Motor neuron (in vitro differentiated cells): ENCODE measurements at regions of chr10 and their contacts with region 1.

Region 1: GRCh38 chr10:52308251-52309031 is 5.6 kb upstream of the DKK1 start:
- ATAC-seq: peak; percentile 93 to 97 (median 94)
- H3K4me3 ChIP-seq: peak overlapping the region; percentile 35 to 45 (median 40)
- H3K27ac ChIP-seq: no peak overlapping the region
- H3K4me1 ChIP-seq: no peaks in the 10 kb centered on the region

Region 2: GRCh38 chr10:52198540-52198939 is 109.9 kb before region 1 on chr10:
- in situ Hi-C with region 1: no loop called
- ATAC-seq: no peak
- H3K4me3 ChIP-seq: no peak overlapping the region
- H3K27ac ChIP-seq: no peak overlapping the region
- H3K4me1 ChIP-seq: no peaks in the 10 kb centered on the region

Region 3: DNA sequence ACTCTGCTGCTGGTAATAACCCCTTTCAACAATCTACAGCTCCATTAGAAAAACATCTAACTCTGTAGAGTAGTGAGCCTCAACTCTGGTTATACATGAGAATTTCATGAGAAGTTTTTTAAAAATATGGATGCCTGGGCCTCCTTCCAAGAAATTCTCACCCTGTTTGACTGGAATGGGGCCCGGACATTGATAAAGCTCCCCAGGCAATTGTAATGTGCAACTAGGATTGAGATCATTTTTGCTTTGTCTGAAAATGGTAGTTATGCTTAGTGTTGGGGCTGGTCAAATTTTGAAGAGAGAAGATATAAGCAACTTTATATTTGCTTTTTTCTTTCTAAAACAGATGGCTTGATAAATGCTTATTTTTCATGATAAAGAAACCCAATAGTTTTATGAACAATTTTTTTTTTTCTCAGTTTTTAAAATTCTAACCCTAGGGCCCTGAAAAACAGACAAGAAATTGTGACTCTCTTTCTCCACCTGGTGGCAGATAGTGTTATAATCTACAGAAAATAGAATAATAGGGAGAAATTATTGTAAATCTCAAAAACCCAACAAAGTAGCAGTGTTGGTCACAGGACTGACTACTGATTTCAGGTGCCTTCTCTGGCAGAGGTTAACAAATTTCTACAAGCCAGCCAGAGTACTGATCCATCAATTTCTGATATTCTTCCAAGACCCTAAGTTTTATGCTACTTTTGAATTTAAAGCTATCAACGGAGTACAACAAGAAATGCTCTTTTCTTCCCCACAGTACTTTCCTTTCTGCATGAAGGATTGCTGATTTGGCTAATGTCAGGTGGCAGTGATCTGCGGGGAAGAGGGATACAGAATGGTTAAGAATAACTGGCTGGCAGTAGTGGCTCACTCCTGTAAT is 180.4 kb after region 1 on chr10:
- in situ Hi-C with region 1: loop called in 6 of 9 experiments (anchors 5 to 25 kb)
- ATAC-seq: peak in 3 of 8 experiments; percentile 13 to 44 (median 40)
- H3K4me3 ChIP-seq: no peak overlapping the region
- H3K27ac ChIP-seq: no peak overlapping the region
- H3K4me1 ChIP-seq: peaks cover 0 to 3% of the 10 kb centered on the region in 2 donors

Region 4: GRCh38 chr10:52566471-52567246 is 258.2 kb after region 1 on chr10:
- in situ Hi-C with region 1: loop called in 3 of 9 experiments (anchors 25 kb)
- ATAC-seq: no peak
- H3K4me3 ChIP-seq: no peak overlapping the region
- H3K27ac ChIP-seq: no peak overlapping the region
- H3K4me1 ChIP-seq: no peaks in the 10 kb centered on the region

Region 5: GRCh38 chr10:52740913-52741675 is 432.7 kb after region 1 on chr10:
- in situ Hi-C with region 1: loop called in 2 of 9 experiments (anchors 25 kb)
- ATAC-seq: peak in 3 of 8 experiments; percentile 57 to 85 (median 58)
- H3K4me3 ChIP-seq: no peak overlapping the region
- H3K27ac ChIP-seq: no peak overlapping the region
- H3K4me1 ChIP-seq: no peaks in the 10 kb centered on the region

Region 6: DNA sequence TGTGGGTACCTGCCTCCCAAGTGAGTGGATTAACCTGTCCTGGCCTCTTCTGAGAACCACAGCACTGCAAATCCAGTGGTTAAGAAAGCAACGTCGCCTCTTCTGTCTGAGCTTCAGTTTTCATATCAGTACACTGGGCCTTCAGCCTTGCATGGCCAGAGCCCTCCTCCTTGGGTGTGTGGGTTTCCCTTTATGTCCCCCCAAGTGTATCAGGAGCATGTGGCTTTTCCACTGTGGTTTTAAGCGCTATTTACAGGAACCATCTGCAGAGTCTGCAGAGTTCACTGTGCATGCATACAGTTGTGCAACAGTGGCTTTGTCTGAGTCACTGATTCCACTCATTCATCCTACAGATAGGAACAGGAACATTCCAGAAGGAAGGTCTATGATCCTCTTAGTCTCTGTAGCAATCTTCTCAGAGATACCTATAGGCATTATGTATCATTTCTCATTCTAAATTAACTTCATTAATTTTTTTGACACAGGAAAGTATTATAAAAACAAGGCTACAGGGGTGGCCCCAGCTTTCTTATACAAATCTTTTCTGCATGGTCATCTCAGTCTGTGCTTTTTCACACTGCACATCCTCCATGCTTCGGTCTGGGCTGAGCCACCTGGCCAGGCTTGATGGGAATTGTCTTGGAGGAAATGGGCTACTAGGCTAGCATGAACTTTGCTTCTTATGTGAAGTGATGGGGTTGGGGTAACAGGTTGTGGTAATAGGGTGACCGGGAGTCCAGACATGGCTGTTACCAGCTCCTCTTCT is 447.0 kb after region 1 on chr10:
- in situ Hi-C with region 1: loop called in 1 of 9 experiments (anchors 25 kb)
- ATAC-seq: peak in 2 of 8 experiments; percentile 65 to 66
- H3K4me3 ChIP-seq: no peak overlapping the region
- H3K27ac ChIP-seq: no peak overlapping the region
- H3K4me1 ChIP-seq: no peaks in the 10 kb centered on the region

Region 7: DNA sequence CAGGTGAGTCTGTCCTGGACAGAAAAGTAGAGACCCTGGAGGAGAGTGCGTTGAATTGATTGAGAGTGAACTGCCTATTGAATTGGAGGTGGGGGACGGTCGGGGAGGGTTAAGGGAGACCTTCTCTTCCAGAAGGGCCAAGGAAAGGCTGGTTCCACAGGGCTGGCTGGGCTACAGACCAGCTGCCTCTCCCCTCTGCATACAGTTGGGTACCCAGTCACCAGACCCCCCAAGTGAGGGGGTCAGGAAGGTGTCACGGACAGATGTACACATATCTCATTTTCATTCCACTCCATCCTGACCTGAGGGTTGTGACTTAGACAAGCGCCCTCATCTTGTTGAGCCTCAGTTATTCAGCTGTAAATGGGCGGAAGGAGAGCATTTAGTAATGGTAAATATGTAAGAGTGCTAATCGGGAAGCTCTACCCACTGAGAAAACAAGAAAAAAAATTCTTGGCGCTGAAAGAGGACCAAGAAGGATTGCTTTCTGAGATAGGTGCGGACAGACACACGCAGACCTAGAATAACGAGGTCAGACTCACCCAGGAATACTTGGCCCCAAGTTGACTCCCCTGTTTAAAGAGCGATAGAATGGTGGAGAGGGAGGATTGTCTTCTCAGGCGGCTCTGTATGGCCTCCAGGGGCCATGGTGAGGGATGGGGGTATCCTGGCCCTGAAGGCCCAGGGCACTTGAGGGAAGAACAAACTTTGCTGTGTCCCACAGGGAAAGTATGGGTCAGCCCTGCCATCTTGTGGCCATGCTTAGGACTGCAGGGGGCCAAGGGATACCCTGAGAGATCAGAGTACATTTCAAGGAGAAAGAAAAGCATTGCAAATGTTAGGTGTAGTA is 471.3 kb after region 1 on chr10:
- in situ Hi-C with region 1: loop called in 2 of 9 experiments (anchors 25 kb)
- ATAC-seq: peak; percentile 64 to 97 (median 80)
- H3K4me3 ChIP-seq: no peak overlapping the region
- H3K27ac ChIP-seq: no peak overlapping the region
- H3K4me1 ChIP-seq: no peaks in the 10 kb centered on the region